Heart left ventricle (tissue), 16 donors: ENCODE measurements at regions of chr13 and their contacts with region 1.

Region 1: DNA sequence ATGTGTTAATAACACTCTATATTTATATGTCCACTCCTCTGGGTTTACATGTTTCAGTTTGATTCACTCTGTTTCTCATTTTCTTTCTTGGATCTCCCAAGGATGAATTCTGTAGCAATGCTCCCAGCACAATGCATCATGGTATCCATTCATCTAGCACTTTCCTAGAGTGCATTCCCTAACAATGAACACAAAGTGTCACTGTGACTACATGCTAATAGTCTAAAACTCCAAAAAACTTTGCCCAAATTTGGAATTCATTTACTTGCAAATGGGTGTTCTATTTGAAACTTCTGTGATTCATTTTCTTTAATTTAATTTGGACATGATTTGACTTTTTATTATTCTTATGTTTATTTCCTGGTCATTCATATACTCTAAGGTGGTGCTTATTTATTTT is 286.3 kb downstream of the POU4F1 start:
- DNase-seq: no peak
- ATAC-seq: no peak
- H3K4me3 ChIP-seq: no peak overlapping the region
- H3K27ac ChIP-seq: no peak overlapping the region
- H3K4me1 ChIP-seq: no peaks in the 10 kb centered on the region
- H3K27me3 ChIP-seq: peaks cover 0 to 6% (median 0%) of the 10 kb centered on the region in 9 donors
- CTCF ChIP-seq: peak; percentile 14 to 59 (median 46)
- POLR2A ChIP-seq: no peak

Region 2: DNA sequence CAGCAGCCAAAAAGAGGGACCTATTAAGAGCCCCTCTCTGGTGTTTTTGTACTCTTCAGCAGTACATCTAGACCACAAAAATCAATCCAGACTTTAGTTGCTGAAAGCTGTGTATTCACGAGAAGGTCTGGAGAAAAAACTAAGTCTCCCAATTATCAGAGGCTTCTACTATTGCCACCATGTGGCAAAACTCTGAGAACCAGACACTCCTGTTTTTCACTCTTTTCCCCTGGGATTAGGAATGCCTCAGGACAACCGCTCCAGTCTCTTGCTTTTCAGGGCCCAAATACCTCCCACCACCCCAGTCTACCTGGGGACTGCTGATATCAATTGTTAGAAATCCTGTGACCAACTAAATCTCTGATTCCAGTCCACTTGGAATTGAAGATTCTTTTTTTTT is 372.0 kb after region 1 on chr13:
- intact Hi-C with region 1: loop called in 1 of 10 experiments (anchors 10 kb)
- DNase-seq: no peak
- ATAC-seq: peak in 1 of 4 donors; percentile 36
- H3K4me3 ChIP-seq: no peak overlapping the region
- H3K27ac ChIP-seq: no peak overlapping the region
- H3K4me1 ChIP-seq: no peaks in the 10 kb centered on the region
- H3K27me3 ChIP-seq: peaks cover 0 to 12% (median 0%) of the 10 kb centered on the region in 9 donors
- CTCF ChIP-seq: peak in 8 of 12 donors; percentile 19 to 44 (median 26)
- POLR2A ChIP-seq: no peak

Region 3: DNA sequence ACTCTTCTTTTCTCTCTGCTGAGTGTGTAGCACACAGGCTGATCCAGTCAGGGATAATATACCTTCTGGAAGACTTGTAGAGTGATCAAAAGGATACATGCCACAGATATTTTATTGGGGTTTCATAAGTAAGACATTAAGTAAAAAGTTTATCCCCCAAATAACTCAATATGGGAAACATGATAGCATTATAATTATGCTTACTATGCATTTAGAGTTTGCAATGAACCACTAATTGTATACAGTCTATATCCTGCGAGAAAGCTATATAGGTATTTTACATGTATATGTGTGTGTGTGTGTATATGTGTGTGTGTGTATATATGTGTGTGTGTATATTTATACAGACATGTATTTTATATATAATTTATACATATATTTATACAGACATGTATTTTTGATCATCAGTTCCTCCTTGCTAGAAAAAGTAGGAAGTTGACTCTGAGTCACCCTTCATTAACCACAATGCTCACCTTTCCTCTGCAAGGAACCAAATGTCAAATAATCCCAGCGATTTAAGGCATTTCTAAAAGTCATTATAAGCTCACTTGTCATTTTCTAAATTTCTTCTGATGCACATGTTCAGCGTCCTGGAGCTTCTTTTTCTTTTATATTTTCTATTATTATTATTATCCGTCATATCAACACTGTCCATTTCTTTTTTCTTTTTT is 654.5 kb after region 1 on chr13:
- intact Hi-C with region 1: loop called in 7 of 10 experiments (anchors 5 to 10 kb)
- DNase-seq: no peak
- ATAC-seq: no peak
- H3K4me3 ChIP-seq: no peak overlapping the region
- H3K27ac ChIP-seq: no peak overlapping the region
- H3K4me1 ChIP-seq: no peaks in the 10 kb centered on the region
- H3K27me3 ChIP-seq: peaks cover 0 to 3% (median 0%) of the 10 kb centered on the region in 9 donors
- CTCF ChIP-seq: no peak
- POLR2A ChIP-seq: no peak